WTC11 (cell line): ENCODE measurements at regions of chr11 and their contacts with region 1.

Region 1: GRCh38 chr11:44911029-44911814 is 39.5 kb downstream of the TP53I11 start:
- DNase-seq: peak; percentile 94
- ATAC-seq: peak; percentile 74
- H3K4me3 Mint-ChIP-seq: peak overlapping the region; percentile 54
- H3K27ac Mint-ChIP-seq: no peak overlapping the region
- H3K4me1 Mint-ChIP-seq: peaks cover 36% of the 10 kb centered on the region
- H3K27me3 Mint-ChIP-seq: no peaks in the 10 kb centered on the region
- CTCF ChIP-seq: peak; percentile 87

Region 2: DNA sequence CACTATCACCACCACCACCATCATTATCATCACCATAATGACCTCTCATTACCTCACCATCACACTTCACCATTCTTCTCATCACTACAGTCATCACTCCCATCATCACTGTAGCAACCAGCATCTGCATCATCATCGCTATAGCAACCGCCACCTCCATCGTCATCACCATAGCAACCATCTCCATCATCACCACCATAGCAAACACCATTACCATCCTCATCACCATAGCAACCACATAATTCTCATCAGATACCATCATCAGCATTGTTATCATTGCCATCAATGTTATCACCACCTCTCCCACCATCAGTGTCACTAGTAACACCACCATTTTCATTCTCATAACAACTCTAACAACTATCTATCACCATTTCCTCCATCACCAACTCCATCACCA is 368.9 kb before region 1 on chr11:
- CTCF ChIA-PET with region 1: no interaction called
- POLR2A ChIA-PET with region 1: no interaction called
- DNase-seq: no peak
- ATAC-seq: no peak
- H3K4me3 Mint-ChIP-seq: no peak overlapping the region
- H3K27ac Mint-ChIP-seq: no peak overlapping the region
- H3K4me1 Mint-ChIP-seq: peaks cover 10% of the 10 kb centered on the region
- H3K27me3 Mint-ChIP-seq: peaks cover 16% of the 10 kb centered on the region
- CTCF ChIP-seq: no peak

Region 3: GRCh38 chr11:44621140-44621681 is 290.0 kb before region 1 on chr11:
- CTCF ChIA-PET with region 1: interaction called, 72 read pairs
- POLR2A ChIA-PET with region 1: no interaction called
- DNase-seq: peak; percentile 91
- ATAC-seq: peak; percentile 75
- H3K4me3 Mint-ChIP-seq: peak overlapping the region; percentile 65
- H3K27ac Mint-ChIP-seq: no peak overlapping the region
- H3K4me1 Mint-ChIP-seq: peaks cover 35% of the 10 kb centered on the region; the same call in 1 of the 2 replicates
- H3K27me3 Mint-ChIP-seq: peaks cover 16% of the 10 kb centered on the region
- CTCF ChIP-seq: peak; percentile 99

Region 4: DNA sequence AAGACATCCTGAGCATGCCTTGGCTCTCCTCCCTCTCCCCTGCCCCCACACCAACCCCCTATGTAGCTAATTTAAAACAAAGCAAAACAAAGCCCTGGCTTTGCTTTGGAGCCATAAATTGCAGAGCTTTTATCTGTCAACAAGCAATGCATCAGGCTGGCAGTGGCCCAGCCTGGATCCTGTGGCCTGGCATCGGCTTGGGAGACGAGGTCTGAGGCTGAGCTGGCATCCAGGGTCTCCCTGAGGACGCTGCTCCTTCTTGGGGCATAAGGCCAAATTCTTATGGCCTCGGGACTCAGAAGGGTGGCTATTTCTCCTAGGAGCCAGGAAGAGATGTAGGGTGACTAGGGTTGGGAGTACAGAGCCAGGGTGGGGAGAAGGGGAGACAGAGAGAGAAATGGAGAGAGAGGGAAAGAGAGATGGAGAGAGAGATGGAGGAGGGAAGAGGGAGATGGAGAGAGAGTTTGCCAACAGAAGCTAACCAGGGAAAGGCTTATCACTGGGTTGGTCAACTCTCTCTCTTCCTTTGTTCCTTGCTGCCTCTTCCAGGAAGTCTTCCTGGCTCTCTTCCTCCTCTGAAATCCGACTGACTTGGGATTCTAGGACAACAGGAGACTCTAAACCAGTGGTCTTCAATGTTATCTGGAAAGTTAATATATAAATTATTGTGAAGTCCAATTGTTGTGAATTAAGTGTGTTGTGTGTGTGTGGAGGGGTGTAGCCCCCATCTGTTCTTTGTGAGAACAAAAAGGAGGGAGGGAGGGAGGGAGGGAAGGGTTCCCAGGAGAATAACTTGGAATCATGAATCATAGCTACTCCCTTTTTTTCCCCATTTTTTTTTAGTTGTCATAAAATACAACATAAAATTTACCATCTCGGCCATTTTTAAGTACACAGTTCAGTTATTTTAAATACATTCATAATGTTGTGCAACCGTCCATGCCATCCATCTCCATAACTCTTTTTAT is 155.4 kb before region 1 on chr11:
- CTCF ChIA-PET with region 1: interaction called, 20 read pairs
- POLR2A ChIA-PET with region 1: no interaction called
- DNase-seq: no peak
- ATAC-seq: no peak
- H3K4me3 Mint-ChIP-seq: no peak overlapping the region
- H3K27ac Mint-ChIP-seq: no peak overlapping the region
- H3K4me1 Mint-ChIP-seq: peaks cover 66% of the 10 kb centered on the region
- H3K27me3 Mint-ChIP-seq: peaks cover 56% of the 10 kb centered on the region
- CTCF ChIP-seq: no peak

Region 5: DNA sequence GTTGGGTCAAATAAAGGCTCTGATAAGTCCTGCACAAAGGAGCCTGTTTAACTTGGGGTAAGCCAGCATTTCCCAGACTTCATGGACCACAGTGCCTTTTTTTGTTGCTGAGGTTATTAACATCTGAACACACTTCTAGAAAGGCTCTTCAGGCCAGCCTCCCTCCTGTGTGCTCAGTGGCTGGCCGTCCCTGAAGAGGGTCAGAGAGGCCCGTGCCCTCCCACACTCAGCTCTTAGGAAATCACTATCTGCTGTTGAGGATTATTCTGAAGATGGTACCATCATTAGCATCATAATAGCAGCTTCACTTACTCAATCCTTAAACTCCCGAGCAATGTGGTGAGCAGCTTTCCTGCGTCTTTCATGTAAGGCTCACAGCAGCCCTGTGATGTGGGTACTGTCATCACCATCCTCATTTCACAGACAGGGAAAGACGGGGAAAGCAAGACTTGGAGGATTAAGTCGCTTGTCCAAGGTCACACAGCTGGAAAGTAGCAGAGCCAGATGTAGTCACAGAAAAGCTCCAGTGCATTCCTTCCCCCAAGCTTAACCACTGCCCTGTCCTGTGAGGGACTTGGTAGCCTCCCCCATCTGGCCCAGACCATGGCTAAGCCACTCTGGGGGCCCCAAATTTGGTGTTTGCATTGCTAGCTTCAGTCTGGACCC is 113.1 kb before region 1 on chr11:
- CTCF ChIA-PET with region 1: interaction called, 13 read pairs
- POLR2A ChIA-PET with region 1: no interaction called
- DNase-seq: no peak
- ATAC-seq: peak; percentile 79
- H3K4me3 Mint-ChIP-seq: peak overlapping the region; percentile 10; the same call in 1 of the 2 replicates
- H3K27ac Mint-ChIP-seq: peak overlapping the region; percentile 86
- H3K4me1 Mint-ChIP-seq: peaks cover 71% of the 10 kb centered on the region
- H3K27me3 Mint-ChIP-seq: no peaks in the 10 kb centered on the region; the same call in 1 of the 2 replicates
- CTCF ChIP-seq: no peak

Region 6: DNA sequence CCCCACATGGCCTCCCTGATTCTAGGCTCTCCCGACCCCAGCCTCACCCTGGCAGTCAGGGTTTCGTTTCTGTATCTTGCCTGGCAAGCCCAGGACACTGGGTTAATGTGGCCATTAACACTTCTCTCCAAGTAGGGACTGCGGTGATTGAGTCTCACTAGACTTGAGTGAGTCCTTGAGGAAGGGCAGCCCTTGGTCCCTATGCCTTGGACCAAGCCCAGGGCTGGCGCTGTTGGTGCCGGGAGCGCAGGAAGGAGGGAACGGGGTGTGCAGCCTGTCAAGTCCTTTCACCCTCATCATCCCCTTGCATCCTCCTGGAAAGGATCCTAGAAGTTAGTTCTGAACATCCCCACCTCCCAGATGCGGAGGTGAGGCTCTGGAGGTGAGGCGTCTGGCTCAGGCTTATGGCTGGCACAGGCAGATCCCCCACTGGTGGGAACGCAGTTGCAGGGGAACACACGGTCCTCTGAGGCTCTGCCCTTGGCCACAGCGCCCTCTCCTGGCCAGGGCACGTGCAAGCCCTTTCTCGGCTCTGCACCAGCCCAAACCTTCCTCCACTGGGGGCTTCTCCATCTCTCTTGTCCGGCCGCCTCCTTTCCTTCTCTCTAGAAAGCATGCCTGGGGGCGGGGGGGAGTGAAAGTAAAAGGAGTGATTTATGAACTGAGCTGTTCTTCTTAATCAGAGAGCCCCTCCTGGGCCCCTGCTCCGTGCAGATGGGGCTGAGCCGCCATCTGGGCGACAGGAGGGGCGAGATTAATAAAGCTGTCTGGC is 17.2 kb before region 1 on chr11:
- CTCF ChIA-PET with region 1: interaction called, 38 read pairs
- POLR2A ChIA-PET with region 1: no interaction called
- DNase-seq: peak; percentile 92
- ATAC-seq: peak; percentile 93
- H3K4me3 Mint-ChIP-seq: no peak overlapping the region
- H3K27ac Mint-ChIP-seq: no peak overlapping the region
- H3K4me1 Mint-ChIP-seq: peaks cover 31% of the 10 kb centered on the region
- H3K27me3 Mint-ChIP-seq: no peaks in the 10 kb centered on the region
- CTCF ChIP-seq: peak; percentile 95

Region 7: DNA sequence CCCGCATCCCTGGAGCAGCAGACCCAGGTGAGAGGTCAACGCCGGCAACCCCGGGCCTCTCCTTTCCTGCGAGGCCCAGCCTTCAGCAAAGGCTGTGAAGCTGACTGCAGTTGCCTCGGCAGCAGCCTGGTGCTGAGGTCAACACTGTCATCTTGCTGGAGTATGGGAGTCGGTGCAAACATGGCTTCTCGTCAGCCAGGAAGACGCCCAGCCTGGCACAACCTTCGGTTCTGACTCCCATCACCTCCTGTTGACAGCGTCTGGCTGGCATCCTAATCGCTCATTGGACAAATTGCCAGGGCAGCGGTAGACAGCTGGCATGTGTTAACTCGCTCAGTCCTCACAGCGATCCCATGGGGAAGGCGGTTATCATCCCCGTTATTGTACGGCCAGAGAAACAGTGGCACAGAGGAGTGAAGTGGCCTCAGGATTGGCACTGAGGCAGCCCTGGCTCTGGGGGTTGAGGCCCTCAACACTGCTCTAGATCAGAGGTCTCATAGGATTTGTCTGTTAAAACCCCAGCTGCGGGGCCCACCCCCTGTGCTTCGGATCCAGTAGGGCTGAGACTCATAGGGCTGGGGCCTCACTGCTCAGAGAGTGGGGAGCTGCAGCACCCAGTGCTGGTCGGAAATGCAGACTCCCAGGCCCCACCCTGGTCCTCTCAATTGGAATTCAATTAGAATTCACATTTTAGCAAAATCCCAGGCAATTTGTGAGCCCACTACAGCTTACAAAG is 78.8 kb after region 1 on chr11:
- CTCF ChIA-PET with region 1: no interaction called
- POLR2A ChIA-PET with region 1: no interaction called
- DNase-seq: no peak
- ATAC-seq: no peak
- H3K4me3 Mint-ChIP-seq: no peak overlapping the region
- H3K27ac Mint-ChIP-seq: no peak overlapping the region
- H3K4me1 Mint-ChIP-seq: peaks cover 35% of the 10 kb centered on the region
- H3K27me3 Mint-ChIP-seq: peaks cover 4% of the 10 kb centered on the region
- CTCF ChIP-seq: no peak

Region 8: DNA sequence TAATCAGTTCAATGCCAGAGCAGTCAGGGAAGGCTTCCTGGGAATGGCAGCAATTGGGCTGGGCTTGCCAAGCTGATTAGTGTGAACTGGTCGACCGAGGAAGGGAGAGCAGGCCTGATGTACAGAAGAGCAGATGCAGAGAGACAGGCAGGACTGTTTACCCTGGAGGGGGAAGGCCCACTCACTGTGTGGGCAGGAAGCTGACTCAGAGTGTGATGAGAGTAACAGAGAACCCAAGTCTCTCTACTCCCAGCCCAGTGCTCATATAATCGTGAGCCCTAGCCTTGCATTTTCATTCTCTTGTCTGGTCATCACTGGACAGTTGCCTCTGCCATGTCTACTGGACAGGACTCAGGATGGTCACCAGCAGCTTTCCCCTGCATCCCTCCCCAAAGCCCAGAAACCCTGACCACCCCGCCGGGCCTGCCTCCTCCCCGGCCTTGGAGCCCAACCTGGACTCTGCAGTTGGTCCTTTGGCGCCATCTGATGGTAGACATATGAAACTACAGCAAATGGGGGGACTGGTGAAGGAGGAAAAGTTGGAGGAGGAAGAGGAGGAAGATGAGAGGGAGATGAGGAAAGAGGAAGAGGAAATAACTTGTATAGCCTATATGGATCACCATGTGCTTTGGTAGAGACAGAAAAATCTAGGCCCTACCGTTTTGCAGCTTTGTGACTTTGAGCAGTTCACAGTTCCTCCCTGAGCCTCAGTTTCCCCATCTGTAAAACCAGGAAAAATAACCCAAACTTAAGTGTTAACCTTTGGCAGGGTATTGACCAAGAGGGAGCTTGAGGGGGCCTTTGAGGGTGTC is 191.8 kb after region 1 on chr11:
- CTCF ChIA-PET with region 1: interaction called, 15 read pairs
- POLR2A ChIA-PET with region 1: no interaction called
- DNase-seq: peak; percentile 68
- ATAC-seq: peak; percentile 31
- H3K4me3 Mint-ChIP-seq: no peak overlapping the region
- H3K27ac Mint-ChIP-seq: no peak overlapping the region
- H3K4me1 Mint-ChIP-seq: peaks cover 11% of the 10 kb centered on the region
- H3K27me3 Mint-ChIP-seq: 0 out of 2 replicates have a peak, but pooled peaks cover 3% of the 10 kb centered on the region
- CTCF ChIP-seq: peak; percentile 88